Vagina (tissue), 2 donors: ENCODE measurements at regions of chr2 and their contacts with region 1.

Region 1: DNA sequence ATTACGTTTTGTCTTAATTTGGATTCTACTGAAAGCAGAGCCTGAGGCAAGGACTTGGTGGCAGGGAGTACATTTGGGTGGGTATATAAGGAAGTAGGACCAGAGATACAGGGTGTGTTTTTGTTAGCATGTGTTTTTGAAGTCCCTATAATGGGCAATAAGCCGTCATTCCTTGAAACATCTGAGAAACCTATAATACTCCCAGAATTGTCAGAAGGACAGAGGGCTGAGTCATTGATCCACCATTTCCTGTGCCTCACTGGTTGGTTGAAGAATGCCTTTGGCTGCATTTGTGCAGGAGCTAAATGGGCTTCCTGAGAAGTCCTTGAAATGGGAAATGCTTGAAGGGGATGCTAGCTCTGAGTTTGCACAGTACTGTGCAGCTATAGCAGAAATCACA is 281.8 kb upstream of the ZEB2 start:
- DNase-seq: no peak
- H3K4me3 ChIP-seq: no peak overlapping the region
- H3K27ac ChIP-seq: no peak overlapping the region
- H3K4me1 ChIP-seq: no peaks in the 10 kb centered on the region
- H3K27me3 ChIP-seq: no peaks in the 10 kb centered on the region
- CTCF ChIP-seq: no peak
- POLR2A ChIP-seq: no peak

Region 2: DNA sequence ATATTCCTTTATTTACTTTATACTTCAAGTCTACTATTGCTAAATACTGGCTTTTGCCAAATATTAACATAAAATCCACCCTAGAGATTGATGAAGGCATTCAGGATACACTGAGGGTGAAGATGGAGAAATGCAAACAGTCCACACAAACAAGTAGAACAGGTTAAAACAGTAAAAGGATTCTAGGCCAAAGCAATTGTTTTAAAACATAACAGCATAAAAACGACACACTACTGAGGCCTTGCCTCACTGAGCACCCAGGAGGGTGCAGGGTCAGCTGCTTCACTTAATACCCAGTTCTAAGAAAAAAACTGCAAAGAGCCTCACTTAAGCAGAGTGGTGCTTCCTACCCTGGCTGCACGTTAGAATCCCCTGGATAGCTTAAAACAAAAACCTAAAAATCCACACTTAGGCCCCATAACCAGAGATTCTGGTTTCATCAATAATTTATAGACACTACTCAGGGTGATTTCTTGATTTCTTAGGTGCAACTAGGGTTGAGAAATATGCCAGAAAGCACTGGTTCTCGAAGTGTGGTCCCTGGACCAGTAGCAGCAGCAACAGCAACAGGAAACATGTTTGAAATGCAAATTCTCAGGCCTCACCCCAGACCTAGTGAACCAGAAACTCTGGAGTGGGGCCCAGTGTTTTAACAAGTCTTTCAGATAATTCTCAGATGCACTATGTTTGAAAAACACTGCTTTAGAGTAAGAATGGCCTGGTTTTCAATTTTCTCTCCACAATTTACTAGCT is 561.0 kb before region 1 on chr2:
- intact Hi-C with region 1: loop called (anchors 5 kb)
- DNase-seq: no peak
- H3K4me3 ChIP-seq: no peak overlapping the region
- H3K27ac ChIP-seq: no peak overlapping the region
- H3K4me1 ChIP-seq: no peaks in the 10 kb centered on the region
- H3K27me3 ChIP-seq: no peaks in the 10 kb centered on the region
- CTCF ChIP-seq: no peak
- POLR2A ChIP-seq: no peak

Region 3: DNA sequence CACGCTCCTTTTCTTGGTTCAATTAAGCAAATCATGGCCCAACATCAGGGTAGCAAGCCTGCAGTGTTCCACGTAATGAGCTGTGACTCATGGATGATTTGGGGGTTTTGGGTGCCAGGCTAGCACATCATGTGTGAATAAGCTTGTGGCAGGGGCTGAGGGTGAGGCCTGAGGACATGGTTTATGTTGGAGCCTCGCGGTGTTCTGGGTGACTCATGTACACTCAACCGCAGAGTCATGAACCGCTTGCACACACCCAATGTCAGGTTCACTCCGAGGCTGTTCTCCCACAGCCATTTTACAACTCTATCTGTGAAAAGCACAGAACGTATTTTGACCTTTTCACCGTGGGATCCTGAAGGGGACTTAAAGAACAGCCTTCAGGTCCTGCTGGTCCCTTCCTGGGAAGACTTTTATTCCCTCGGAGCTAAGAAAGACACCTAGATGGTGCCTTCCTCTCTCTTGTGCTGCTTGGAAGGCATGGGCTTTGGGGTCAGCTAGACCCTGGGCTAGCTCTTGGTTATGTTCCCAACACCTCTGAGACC is 142.0 kb before region 1 on chr2:
- intact Hi-C with region 1: no loop called
- DNase-seq: no peak
- H3K4me3 ChIP-seq: no peak overlapping the region
- H3K27ac ChIP-seq: no peak overlapping the region
- H3K4me1 ChIP-seq: no peaks in the 10 kb centered on the region
- H3K27me3 ChIP-seq: no peaks in the 10 kb centered on the region
- CTCF ChIP-seq: no peak
- POLR2A ChIP-seq: no peak